AG04450 (cell line): ENCODE measurements at regions of chr15 and their contacts with region 1.

Region 1: GRCh38 chr15:84671211-84671610 is 13.2 kb upstream of the NMB start:
- DNase-seq: peak; percentile 58
- H3K4me3 ChIP-seq: no peak overlapping the region
- H3K27ac ChIP-seq: peak overlapping the region; percentile 33
- H3K27me3 ChIP-seq: no peaks in the 10 kb centered on the region
- CTCF ChIP-seq: no peak

Region 2: DNA sequence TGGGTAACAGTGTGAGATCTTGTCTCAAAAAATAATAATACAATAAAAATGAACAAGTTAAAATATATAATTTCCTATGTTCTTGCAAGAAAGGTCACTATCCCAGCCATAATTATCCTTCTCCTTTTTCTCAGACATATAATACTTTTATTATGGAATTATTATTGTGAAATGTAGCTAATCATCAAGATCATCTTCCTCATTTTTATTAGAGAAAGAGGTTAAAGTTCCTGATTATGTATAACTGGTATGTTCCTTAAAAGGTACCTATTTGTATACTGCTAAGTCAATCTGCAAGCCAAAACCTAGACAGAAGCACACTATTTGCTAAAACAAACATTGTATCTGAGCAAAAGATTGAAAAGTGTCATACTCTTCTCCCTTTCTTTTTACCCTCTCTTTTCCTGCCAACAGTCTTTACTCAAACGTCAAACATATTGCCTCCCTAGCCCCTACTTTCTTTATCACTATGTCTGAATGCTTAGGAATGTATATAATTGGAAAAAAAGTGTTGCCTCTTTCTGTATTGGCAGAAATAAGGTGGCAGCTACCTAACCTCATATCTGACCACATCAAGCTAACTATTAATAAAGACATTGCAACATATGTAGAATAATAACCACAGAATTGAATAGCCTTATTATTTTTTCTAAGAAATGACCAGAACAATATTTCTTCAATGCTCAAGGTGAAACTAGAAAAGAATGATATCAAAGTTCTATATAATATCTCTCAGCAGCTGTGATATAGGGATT is 26.2 kb after region 1 on chr15:
- CTCF ChIA-PET with region 1: no interaction called
- POLR2A ChIA-PET with region 1: no interaction called
- DNase-seq: no peak
- H3K4me3 ChIP-seq: no peak overlapping the region
- H3K27ac ChIP-seq: no peak overlapping the region
- H3K27me3 ChIP-seq: no peaks in the 10 kb centered on the region
- CTCF ChIP-seq: no peak

Region 3: GRCh38 chr15:85104585-85104984 is 433.4 kb after region 1 on chr15:
- CTCF ChIA-PET with region 1: interaction called, 11 read pairs
- POLR2A ChIA-PET with region 1: no interaction called
- DNase-seq: no peak
- H3K4me3 ChIP-seq: no peak overlapping the region
- H3K27ac ChIP-seq: no peak overlapping the region
- H3K27me3 ChIP-seq: no peaks in the 10 kb centered on the region
- CTCF ChIP-seq: no peak